Astrocyte of the cerebellum (primary cell): ENCODE measurements at regions of chr11 and their contacts with region 1.

Region 1: GRCh38 chr11:125892071-125892470 is 4.6 kb downstream of the HYLS1 start:
- DNase-seq: no peak
- H3K4me3 ChIP-seq: no peak overlapping the region
- CTCF ChIP-seq: no peak

Region 2: DNA sequence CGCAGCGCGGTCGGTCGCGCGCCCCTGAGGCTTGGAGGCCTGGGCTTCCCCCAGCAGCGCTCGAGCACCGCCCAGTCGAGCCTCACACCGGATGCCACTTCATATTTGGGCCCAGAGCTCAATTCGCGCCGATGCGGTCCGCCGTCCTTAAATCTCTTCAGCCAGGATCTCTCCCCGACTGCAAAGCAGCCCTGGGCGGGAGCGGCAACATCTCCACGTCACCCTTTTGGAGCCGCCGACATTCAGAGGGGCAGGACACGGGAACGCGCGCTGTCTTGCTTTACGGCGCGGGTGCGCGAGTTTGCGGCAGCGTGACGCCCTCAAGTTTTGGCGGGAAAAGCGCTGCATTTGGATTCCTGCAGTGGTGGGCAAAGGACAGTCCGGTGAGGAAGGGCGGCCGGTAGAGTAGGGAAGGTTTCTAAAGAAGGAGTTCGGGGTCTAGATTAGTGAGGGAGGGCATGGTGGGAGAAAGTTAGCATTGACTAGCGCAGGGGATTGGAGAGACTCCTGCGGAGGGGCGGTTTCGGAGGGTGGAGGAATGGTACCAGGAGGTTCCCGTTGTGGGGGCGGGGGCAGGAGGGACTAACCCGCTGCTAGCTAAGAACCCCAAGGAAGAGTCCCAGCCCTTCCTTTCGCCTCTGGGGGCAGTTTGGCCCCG is 266.3 kb before region 1 on chr11:
- in situ Hi-C with region 1: loop called (anchors 10 kb)
- DNase-seq: peak; percentile 71
- H3K4me3 ChIP-seq: peak overlapping the region; percentile 65
- CTCF ChIP-seq: no peak

Region 3: DNA sequence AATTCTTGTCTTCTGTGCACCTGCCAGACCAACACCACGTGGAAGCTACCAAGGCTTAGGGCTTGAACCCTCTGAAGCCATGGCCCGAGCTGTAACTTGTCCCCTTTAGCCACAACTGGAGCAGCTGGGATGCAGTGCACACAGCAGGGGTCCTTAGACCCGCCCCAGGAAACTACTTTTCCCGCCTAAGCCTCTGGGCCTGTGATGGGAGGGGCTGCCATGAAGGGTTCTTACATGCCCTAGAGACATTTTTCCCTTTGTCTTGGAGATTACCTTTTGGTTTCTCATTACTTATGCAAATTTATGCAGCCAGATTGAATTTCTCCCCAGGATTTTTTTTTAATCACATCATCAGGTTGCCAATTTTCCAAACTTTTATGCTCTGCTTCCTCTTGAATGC is 94.4 kb before region 1 on chr11:
- in situ Hi-C with region 1: no loop called
- DNase-seq: no peak
- H3K4me3 ChIP-seq: no peak overlapping the region
- CTCF ChIP-seq: no peak